Mammary epithelial cell (primary cell): ENCODE measurements at regions of chr7 and their contacts with region 1.

Region 1: GRCh38 chr7:108181073-108181985 is 51.2 kb upstream of the LAMB4 start:
- DNase-seq: peak; percentile 39
- H3K4me3 ChIP-seq: no peak overlapping the region
- H3K27ac ChIP-seq: no peak overlapping the region
- H3K4me1 ChIP-seq: no peaks in the 10 kb centered on the region
- H3K27me3 ChIP-seq: no peaks in the 10 kb centered on the region
- CTCF ChIP-seq: peak; percentile 50 to 60

Region 2: GRCh38 chr7:108246227-108246837 is 65.0 kb after region 1 on chr7:
- CTCF ChIA-PET with region 1: no interaction called
- dilution Hi-C with region 1: no loop called
- in situ Hi-C with region 1: no loop called
- intact Hi-C with region 1: loop called (anchors 2 kb)
- DNase-seq: peak; percentile 98
- H3K4me3 ChIP-seq: no peak overlapping the region
- H3K27ac ChIP-seq: peak overlapping the region; percentile 78
- H3K4me1 ChIP-seq: peaks cover 22% of the 10 kb centered on the region
- H3K27me3 ChIP-seq: no peaks in the 10 kb centered on the region
- CTCF ChIP-seq: peak; percentile 45 to 50

Region 3: DNA sequence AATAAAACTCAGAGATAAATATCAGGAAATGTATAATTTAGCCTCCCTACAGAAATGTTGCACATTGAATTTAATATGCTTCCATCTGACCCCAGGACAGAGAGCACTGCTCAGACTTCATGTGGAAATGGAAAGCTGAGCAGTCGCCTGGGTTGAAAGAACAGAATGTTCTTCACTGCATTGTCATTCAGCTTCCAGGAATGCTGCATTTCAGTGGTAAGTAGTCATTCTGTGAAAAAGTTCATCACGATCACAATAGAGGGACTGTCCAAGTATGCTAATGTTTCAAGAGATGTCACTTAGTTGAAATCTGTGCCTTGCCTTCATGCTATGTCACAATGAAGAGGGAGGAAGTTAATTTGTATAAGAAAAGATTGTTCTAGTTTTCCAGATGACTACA is 127.6 kb after region 1 on chr7:
- CTCF ChIA-PET with region 1: no interaction called
- dilution Hi-C with region 1: no loop called
- in situ Hi-C with region 1: no loop called
- intact Hi-C with region 1: loop called (anchors 5 kb)
- DNase-seq: peak; percentile 80
- H3K4me3 ChIP-seq: no peak overlapping the region
- H3K27ac ChIP-seq: peak overlapping the region; percentile 99
- H3K4me1 ChIP-seq: peaks cover 56% of the 10 kb centered on the region
- H3K27me3 ChIP-seq: no peaks in the 10 kb centered on the region
- CTCF ChIP-seq: no peak

Region 4: GRCh38 chr7:108459931-108460551 is 278.7 kb after region 1 on chr7:
- CTCF ChIA-PET with region 1: interaction called, 8 read pairs
- dilution Hi-C with region 1: no loop called
- in situ Hi-C with region 1: loop called in 1 of 2 experiments (anchors 25 kb)
- intact Hi-C with region 1: loop called (anchors 1 kb)
- DNase-seq: peak; percentile 22
- H3K4me3 ChIP-seq: no peak overlapping the region
- H3K27ac ChIP-seq: no peak overlapping the region
- H3K4me1 ChIP-seq: peaks cover 2% of the 10 kb centered on the region
- H3K27me3 ChIP-seq: no peaks in the 10 kb centered on the region
- CTCF ChIP-seq: peak; percentile 61 to 67

Region 5: GRCh38 chr7:108486291-108486966 is 305.1 kb after region 1 on chr7:
- CTCF ChIA-PET with region 1: no interaction called
- dilution Hi-C with region 1: no loop called
- in situ Hi-C with region 1: loop called in 1 of 2 experiments (anchors 10 kb)
- intact Hi-C with region 1: no loop called
- DNase-seq: no peak
- H3K4me3 ChIP-seq: no peak overlapping the region
- H3K27ac ChIP-seq: no peak overlapping the region
- H3K4me1 ChIP-seq: no peaks in the 10 kb centered on the region
- H3K27me3 ChIP-seq: no peaks in the 10 kb centered on the region
- CTCF ChIP-seq: no peak

Region 6: DNA sequence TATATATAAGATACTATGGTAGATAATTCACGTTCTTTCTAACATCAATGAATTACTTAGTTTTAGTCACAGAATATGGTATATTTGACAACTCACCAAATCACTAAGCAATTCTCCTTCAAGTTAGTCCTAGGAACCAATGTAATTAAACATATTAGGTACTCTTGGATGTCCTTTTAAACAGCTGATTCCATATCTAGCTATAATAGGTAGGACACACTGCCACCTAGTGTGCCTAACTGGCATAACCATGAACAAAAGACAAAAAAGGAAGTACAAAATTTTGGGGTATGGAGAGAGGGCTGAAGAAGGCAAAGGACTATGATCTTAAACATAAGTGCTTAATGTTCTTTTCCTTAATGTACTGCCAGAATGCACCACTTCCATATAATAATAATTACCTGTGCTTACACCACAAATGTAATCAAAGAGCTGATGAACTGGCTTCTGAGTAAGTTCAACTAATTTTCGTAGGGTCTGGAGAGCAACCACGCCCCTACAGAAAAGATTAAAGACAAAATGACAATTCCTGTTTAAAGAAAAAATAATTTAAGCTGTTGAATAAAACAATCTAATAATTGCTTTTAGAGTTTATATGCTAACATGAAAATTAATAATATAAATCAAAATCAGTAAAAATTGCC is 315.9 kb after region 1 on chr7:
- CTCF ChIA-PET with region 1: no interaction called
- dilution Hi-C with region 1: no loop called
- in situ Hi-C with region 1: no loop called
- intact Hi-C with region 1: loop called (anchors 1 kb)
- DNase-seq: peak; percentile 42
- H3K4me3 ChIP-seq: no peak overlapping the region
- H3K27ac ChIP-seq: no peak overlapping the region
- H3K4me1 ChIP-seq: no peaks in the 10 kb centered on the region
- H3K27me3 ChIP-seq: no peaks in the 10 kb centered on the region
- CTCF ChIP-seq: peak; percentile 80 to 93